Activated CD4-positive, alpha-beta T cell treated with anti-CD3 and anti-CD28 coated beads, Interleukin-2, amount 10 ng/mL, durations not matched to agents 24 days and 14 days (primary cell): ENCODE measurements at regions of chr5 and their contacts with region 1.

Region 1: DNA sequence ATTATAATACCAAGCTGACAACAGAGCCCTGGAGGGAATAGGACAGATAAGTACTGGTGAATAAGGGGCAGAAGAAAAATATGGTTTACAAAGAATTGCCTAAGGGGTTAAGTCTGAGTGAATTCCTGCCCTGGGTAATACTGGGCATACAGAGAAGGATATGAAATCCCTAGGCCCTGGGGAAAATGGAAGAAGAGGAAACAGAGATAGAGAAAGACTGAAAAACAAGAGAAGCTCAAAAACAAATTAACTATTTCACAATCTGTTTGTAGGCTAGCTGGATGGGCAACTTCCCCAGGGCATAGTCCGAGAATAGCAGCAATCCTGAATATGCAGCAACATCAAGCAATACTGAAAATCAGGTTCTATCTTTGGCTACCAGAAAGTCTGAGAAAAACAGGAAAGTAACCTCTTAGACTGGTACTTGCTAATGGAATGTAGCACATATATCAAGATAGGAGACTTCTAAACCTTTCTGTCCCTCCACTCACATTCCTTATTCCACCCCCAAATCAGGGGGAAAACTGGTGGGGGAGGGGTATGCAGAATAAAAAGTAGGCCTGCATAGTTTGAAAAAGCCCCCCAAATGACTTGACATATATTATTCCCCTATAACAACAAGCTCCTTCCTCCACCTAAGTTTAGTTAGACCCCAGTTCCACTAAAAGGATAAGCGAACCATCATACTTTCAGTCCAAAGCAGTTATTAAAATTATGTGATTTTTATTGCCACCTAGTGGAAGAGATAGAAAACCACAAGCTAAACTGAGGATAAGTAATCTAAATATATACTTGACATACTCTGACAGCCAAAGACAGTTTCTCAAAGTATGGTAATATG is 20.6 kb downstream of the SLC38A9 start:
- DNase-seq: no peak
- H3K4me3 Mint-ChIP-seq: no peak overlapping the region
- H3K27ac Mint-ChIP-seq: no peak overlapping the region
- H3K4me1 Mint-ChIP-seq: peaks cover 12% of the 10 kb centered on the region
- H3K27me3 Mint-ChIP-seq: no peaks in the 10 kb centered on the region

Region 2: DNA sequence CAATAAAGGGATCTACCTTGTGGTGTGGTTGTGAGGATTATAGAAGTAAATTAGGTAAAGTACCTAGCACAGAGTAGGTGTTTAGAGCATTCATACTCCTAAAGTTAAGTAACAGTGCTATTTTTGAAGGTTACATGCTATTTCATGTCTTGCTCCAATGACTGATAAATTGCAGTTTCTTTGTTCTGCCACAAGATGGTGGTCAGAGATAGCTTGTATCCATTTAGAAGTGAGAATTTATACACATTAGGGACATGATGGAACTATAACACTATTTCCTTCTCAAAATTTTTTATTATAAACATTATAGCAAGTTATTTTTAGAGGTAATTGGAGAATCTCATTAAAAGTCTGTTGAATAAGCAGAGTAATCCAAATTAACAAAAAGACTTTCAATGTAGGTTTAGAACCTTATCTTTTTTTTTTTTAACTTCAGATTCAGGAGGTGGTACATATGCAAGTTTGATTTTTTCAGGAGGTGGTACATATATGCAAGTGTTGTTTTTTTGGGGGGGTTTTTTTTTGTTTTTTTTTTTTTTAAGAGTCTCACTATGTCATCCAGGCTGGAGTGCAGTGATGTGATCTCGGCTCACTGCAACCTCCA is 366.6 kb before region 1 on chr5:
- intact Hi-C with region 1: loop called (anchors 2 kb)
- DNase-seq: peak; percentile 68
- H3K4me3 Mint-ChIP-seq: no peak overlapping the region
- H3K27ac Mint-ChIP-seq: no peak overlapping the region
- H3K4me1 Mint-ChIP-seq: peaks cover 15% of the 10 kb centered on the region
- H3K27me3 Mint-ChIP-seq: no peaks in the 10 kb centered on the region

Region 3: GRCh38 chr5:55344392-55344992 is 347.0 kb before region 1 on chr5:
- intact Hi-C with region 1: loop called (anchors 2 kb)
- DNase-seq: peak; percentile 89
- H3K4me3 Mint-ChIP-seq: no peak overlapping the region
- H3K27ac Mint-ChIP-seq: peak overlapping the region; percentile 62
- H3K4me1 Mint-ChIP-seq: peaks cover 9% of the 10 kb centered on the region
- H3K27me3 Mint-ChIP-seq: no peaks in the 10 kb centered on the region

Region 4: DNA sequence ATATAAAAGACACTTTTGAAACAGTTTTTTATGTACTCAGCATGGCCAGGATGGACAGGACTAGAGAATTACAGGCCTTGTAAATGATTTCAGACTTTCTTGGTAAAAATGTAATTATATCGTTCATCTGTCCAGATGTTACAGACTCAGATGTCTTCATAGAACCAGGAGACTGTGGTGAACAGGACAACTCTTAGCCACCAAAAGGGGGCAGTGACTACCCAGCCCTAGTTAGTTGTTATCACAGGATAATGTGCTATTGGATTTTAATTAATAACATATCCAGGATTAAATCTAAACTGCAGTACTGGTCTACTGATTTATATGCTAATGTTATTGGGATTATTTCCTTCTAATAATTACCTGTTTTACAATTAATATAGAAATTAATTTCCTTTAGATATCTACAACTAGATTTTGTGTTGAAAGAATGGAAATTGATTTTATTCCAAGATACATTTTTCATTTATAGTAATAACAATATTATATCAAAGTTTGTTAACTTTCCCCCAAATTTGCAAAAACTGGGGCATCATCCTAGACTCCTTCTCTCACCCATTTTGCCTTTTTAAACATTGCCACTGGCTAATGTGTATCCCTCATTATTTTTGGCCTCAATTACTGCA is 284.3 kb before region 1 on chr5:
- intact Hi-C with region 1: loop called (anchors 2 kb)
- DNase-seq: peak; percentile 65
- H3K4me3 Mint-ChIP-seq: no peak overlapping the region
- H3K27ac Mint-ChIP-seq: no peak overlapping the region
- H3K4me1 Mint-ChIP-seq: peaks cover 6% of the 10 kb centered on the region
- H3K27me3 Mint-ChIP-seq: no peaks in the 10 kb centered on the region